ENCODE measurements at regions of chr22 and their contacts with region 1.

Region 1: DNA sequence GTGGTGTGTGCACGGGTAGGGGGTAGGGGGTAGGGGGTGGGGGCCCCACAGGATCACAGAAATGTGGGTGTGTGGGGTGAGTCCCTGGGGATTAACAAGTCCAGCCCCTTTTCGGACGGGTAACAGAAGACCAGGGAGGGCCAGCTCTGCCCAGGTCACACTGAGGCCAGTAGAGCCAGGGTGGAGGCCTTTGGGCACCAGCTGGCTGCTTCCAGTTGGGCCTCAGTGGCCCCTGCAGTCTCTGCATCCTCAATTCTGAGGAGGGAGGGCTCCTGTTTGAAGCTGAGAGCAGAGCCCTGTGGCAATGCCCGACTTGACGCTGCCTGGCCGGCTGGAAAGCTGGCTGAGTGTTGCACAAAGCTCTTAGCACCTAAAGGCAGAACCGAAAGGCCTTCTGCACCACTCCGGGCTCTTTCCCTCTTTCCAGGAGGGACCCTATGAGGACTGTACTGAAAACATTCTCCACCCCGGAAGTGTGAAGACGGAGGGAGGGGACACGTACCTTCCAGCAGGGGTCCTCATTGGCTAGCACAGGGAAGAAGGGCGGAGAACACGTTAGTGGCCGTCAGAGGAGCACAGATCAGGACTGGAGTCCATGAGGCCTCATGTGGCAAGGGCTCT is 120.4 kb downstream of the PHF21B start:
- DNase-seq: no peak
- ATAC-seq: no peak
- H3K4me3 ChIP-seq: no peak overlapping the region
- H3K27ac ChIP-seq: no peak overlapping the region
- H3K4me1 ChIP-seq: no peaks in the 10 kb centered on the region
- H3K27me3 ChIP-seq: no peaks in the 10 kb centered on the region
- CTCF ChIP-seq: no peak; a peak in 1 of 6 replicates
- EP300 ChIP-seq: no peak
- POLR2A ChIP-seq: no peak
- RAD21 ChIP-seq: peak; percentile 39; the same call in 1 of the 2 replicates

Region 2: DNA sequence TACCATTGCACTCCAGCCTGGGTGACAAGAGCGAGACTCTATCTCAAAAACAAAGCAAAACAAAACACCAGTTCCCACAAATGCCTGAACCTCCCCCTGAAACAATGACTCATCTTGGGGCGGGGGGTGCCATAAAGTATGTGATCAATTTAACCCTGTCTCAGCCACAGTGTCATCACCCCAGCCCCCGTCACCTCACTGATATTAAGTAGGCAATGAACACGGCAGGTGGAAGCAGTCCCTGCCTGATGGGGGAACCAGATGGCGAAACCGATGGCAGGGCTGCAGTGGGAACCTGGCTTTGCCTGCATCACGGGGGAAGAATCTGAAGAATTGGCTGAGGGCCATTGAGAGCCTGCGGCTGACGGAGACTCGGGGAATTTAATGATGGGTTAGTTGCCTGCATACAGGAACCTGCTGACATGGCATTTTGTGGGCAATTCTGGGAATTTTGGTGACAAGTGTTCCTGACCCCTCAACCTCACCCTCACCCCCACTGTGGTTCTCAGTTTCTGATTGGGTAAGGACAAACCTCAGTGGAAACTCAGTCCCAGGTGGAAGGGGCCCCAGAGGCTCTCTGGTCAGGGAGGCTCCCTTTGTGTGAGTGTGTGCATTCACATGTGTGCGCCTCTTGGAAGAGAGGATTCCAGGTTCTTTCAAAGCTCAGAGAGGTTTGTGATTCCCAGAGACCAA is 537.5 kb before region 1 on chr22:
- CTCF ChIA-PET with region 1: no interaction called
- POLR2A ChIA-PET with region 1: no interaction called
- RAD21 ChIA-PET with region 1: no interaction called
- SMC1A ChIA-PET with region 1: no interaction called
- in situ Hi-C with region 1: loop called (anchors 25 kb)
- intact Hi-C with region 1: no loop called
- DNase-seq: no peak
- ATAC-seq: no peak
- H3K4me3 ChIP-seq: no peak overlapping the region
- H3K27ac ChIP-seq: no peak overlapping the region
- H3K4me1 ChIP-seq: no peaks in the 10 kb centered on the region
- H3K27me3 ChIP-seq: peaks cover 0 to 5% of the 10 kb centered on the region in 2 experiments; a peak in 3 of 4 replicates
- CTCF ChIP-seq: no peak
- EP300 ChIP-seq: no peak
- POLR2A ChIP-seq: no peak
- RAD21 ChIP-seq: no peak

Measured in GM12878 (cell line).